Left ventricle myocardium inferior (tissue), 1 donor: ENCODE measurements at regions of chr4 and their contacts with region 1.

Region 1: GRCh38 chr4:169024762-169025161 is 14.7 kb upstream of the CBR4 start:
- DNase-seq: no peak
- H3K4me3 ChIP-seq: no peak overlapping the region
- H3K27ac ChIP-seq: peak overlapping the region; percentile 18
- H3K4me1 ChIP-seq: peaks cover 6% of the 10 kb centered on the region
- H3K27me3 ChIP-seq: no peaks in the 10 kb centered on the region
- CTCF ChIP-seq: peak; percentile 76

Region 2: DNA sequence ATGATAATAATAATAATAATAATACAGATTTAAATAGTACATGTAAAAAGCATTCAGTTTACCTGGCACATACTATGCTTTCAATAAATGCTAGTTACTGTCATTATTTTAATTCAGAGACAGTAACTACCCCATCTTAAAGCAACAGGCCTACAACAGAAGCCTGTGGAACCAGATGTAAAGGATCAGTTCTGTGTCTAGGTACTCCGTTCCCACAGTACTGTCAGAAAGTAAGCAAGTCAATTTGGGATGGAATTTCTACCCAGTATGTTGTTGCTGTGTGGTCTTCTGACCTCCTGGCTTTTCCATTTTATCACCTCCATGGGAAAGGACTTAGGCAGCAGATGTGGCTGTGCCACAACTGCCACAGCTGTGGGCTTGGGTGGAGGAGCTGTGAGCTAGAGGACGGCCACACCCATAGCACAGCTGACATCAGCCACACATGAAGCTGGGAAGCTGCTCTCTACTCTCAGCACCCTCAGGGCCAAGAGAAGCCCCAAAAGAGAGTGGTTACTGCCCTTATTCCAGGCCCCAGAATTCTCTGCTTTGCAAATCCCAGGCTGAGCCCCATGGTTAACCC is 117.6 kb before region 1 on chr4:
- intact Hi-C with region 1: no loop called
- DNase-seq: no peak
- H3K4me3 ChIP-seq: no peak overlapping the region
- H3K27ac ChIP-seq: peak overlapping the region; percentile 65
- H3K4me1 ChIP-seq: peaks cover 62% of the 10 kb centered on the region
- H3K27me3 ChIP-seq: no peaks in the 10 kb centered on the region
- CTCF ChIP-seq: no peak

Region 3: GRCh38 chr4:169269916-169270809 is 245.4 kb after region 1 on chr4:
- intact Hi-C with region 1: loop called (anchors 10 kb)
- DNase-seq: peak; percentile 75
- H3K4me3 ChIP-seq: peak overlapping the region; percentile 83
- H3K27ac ChIP-seq: peak overlapping the region; percentile 93
- H3K4me1 ChIP-seq: peaks cover 70% of the 10 kb centered on the region
- H3K27me3 ChIP-seq: no peaks in the 10 kb centered on the region
- CTCF ChIP-seq: peak; percentile 42